ENCODE measurements at regions of chr10 and their contacts with region 1.

Region 1: GRCh38 chr10:130254662-130255061 is 118.5 kb downstream of the GLRX3 start:
- DNase-seq: no peak
- ATAC-seq: no peak
- H3K4me3 ChIP-seq: no peak overlapping the region
- H3K4me3 Mint-ChIP-seq: no peak overlapping the region
- H3K27ac ChIP-seq: no peak overlapping the region
- H3K27ac Mint-ChIP-seq: no peak overlapping the region
- H3K4me1 ChIP-seq: no peaks in the 10 kb centered on the region
- H3K4me1 Mint-ChIP-seq: no peaks in the 10 kb centered on the region
- H3K27me3 ChIP-seq: no peaks in the 10 kb centered on the region
- H3K27me3 Mint-ChIP-seq: peaks cover 0 to 6% (median 0%) of the 10 kb centered on the region in 5 donors

Region 2: GRCh38 chr10:130802301-130802700 is 547.6 kb after region 1 on chr10:
- CTCF ChIA-PET with region 1: no interaction called
- POLR2A ChIA-PET with region 1: no interaction called
- intact Hi-C with region 1: no loop called
- DNase-seq: no peak
- ATAC-seq: no peak
- H3K4me3 ChIP-seq: no peak overlapping the region
- H3K4me3 Mint-ChIP-seq: no peak overlapping the region
- H3K27ac ChIP-seq: no peak overlapping the region
- H3K27ac Mint-ChIP-seq: no peak overlapping the region
- H3K4me1 ChIP-seq: no peaks in the 10 kb centered on the region
- H3K4me1 Mint-ChIP-seq: no peaks in the 10 kb centered on the region
- H3K27me3 ChIP-seq: no peaks in the 10 kb centered on the region
- H3K27me3 Mint-ChIP-seq: peaks cover 0 to 11% (median 0%) of the 10 kb centered on the region in 5 donors

Region 3: GRCh38 chr10:131786756-131787605 is 1532.3 kb after region 1 on chr10:
- CTCF ChIA-PET with region 1: no interaction called
- POLR2A ChIA-PET with region 1: no interaction called
- intact Hi-C with region 1: loop called in 1 of 2 experiments (anchors 10 kb)
- DNase-seq: peak in 5 of 9 donors; percentile 13 to 25 (median 17)
- ATAC-seq: no peak
- H3K4me3 ChIP-seq: no peak overlapping the region
- H3K4me3 Mint-ChIP-seq: no peak overlapping the region
- H3K27ac ChIP-seq: no peak overlapping the region
- H3K27ac Mint-ChIP-seq: peak overlapping the region in 1 of 9 donors; percentile 25
- H3K4me1 ChIP-seq: no peaks in the 10 kb centered on the region
- H3K4me1 Mint-ChIP-seq: no peaks in the 10 kb centered on the region
- H3K27me3 ChIP-seq: no peaks in the 10 kb centered on the region
- H3K27me3 Mint-ChIP-seq: peaks cover 0 to 25% (median 13%) of the 10 kb centered on the region in 5 donors

Measured in naive thymus-derived CD4-positive, alpha-beta T cell (primary cell).